ENCODE measurements at regions of chr17 and their contacts with region 1.

Region 1: GRCh38 chr17:75109407-75110233 is at the start of gene ARMC7:
- DNase-seq: peak; percentile 85 to 89 (median 88)
- H3K4me3 ChIP-seq: peak within 1 kb of the TSS; percentile 69 to 84
- H3K4me3 Mint-ChIP-seq: peak within 1 kb of the TSS; percentile 88 to 93 (median 91)
- H3K27ac ChIP-seq: peak within 1 kb of the TSS; percentile 60
- H3K27ac Mint-ChIP-seq: peak within 1 kb of the TSS; percentile 76 to 96 (median 92)
- H3K4me1 ChIP-seq: peaks cover 41% of the 10 kb centered on the region
- H3K4me1 Mint-ChIP-seq: peaks cover 22 to 42% (median 31%) of the 10 kb centered on the region in 4 donors
- H3K27me3 ChIP-seq: no peaks in the 10 kb centered on the region
- H3K27me3 Mint-ChIP-seq: no peaks in the 10 kb centered on the region
- total RNA-seq, gene ARMC7: 20.0 to 21.9 TPM

Region 2: DNA sequence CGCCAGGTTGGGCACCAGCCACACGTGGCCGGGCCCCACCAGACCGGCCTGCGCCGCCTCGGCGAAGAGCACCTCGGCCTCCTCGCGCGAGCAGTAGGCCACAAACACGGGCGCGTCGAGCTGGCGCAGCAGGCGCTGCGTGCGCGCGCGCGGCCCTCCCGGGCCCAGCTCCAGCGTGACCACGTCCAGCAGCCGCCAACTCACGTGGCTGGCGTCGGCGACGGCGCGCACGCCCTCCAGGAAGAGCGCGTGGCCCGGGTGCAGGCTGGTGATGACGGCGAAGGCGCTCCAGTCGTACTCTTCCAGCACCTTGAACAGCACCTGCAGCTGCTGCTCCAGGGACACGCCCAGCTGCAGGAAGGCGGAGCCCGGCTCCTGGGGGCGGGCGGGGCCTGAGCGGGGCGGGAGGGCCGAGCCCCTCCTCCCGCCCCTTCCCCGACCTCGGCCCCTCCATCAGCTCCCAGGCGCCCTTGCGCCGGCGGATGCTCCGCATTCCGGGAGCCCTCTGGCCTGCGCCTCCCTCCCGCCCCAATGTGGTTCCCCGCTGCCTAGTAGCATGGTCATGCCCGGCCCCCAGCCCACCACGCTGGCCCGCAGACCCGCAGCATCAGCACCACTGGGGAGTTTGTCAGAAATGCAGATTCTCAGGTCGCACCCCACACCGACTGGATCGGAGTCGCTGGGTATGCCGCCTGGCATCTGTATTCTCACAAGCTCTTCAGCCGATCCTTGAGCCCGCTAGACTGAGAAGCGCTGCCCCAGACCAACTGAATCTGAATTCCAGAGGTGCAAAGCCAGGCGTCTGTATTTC is 257.2 kb before region 1 on chr17:
- CTCF ChIA-PET with region 1: no interaction called
- POLR2A ChIA-PET with region 1: no interaction called
- intact Hi-C with region 1: no loop called
- DNase-seq: peak; percentile 60 to 80 (median 71)
- H3K4me3 ChIP-seq: peak overlapping the region in 1 of 2 donors; percentile 41
- H3K4me3 Mint-ChIP-seq: peak overlapping the region; percentile 75 to 84 (median 78)
- H3K27ac ChIP-seq: no peak overlapping the region
- H3K27ac Mint-ChIP-seq: peak overlapping the region in 2 of 7 donors; percentile 24 to 72
- H3K4me1 ChIP-seq: peaks cover 11% of the 10 kb centered on the region
- H3K4me1 Mint-ChIP-seq: peaks cover 3 to 19% (median 6%) of the 10 kb centered on the region in 4 donors
- H3K27me3 ChIP-seq: peaks cover 25% of the 10 kb centered on the region
- H3K27me3 Mint-ChIP-seq: peaks cover 19 to 50% of the 10 kb centered on the region in 2 donors

Region 3: DNA sequence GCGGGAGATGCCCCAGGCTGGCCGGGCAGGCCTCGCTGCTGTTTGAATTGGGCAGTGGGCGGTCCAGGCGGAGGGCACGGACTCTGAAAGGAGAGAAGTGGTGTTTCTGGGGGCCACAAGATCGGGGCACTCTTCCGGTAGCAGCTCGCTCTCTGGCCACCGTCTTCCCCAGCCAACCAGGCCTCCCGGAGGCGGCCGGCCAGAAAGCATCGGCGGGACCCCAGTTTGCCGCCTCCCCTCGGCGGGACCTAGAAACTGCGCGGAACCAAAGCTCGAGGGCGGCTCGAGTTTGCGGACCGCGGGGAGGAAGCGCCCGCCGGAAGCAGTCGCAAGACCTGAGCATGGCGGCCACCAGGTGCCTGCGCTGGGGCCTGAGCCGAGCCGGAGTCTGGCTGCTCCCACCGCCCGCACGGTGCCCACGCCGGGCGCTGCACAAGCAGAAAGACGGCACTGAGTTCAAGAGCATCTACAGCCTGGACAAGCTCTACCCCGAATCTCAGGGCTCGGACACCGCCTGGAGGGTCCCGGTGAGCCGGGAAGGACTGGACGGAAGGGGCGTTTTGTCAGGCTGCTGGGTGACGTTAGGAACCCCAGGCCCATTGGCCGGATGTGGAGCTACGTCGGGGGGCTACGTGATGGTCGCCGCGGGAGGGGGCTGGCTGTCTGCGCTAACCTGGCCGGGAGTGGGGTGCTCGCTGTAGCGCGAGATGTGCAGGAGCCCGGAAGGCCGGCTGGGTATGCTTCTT is 97.1 kb before region 1 on chr17 and contains the start of gene MRPL58:
- CTCF ChIA-PET with region 1: interaction called, 19 read pairs
- POLR2A ChIA-PET with region 1: interaction called, 17 read pairs
- intact Hi-C with region 1: loop called (anchors 1 kb)
- DNase-seq: peak; percentile 75 to 79 (median 76)
- H3K4me3 ChIP-seq: peak within 1 kb of the TSS; percentile 85 to 90
- H3K4me3 Mint-ChIP-seq: peak within 1 kb of the TSS; percentile 93 to 98 (median 96)
- H3K27ac ChIP-seq: peak within 1 kb of the TSS; percentile 71
- H3K27ac Mint-ChIP-seq: peak within 1 kb of the TSS; percentile 80 to 94 (median 92)
- H3K4me1 ChIP-seq: peaks cover 19% of the 10 kb centered on the region
- H3K4me1 Mint-ChIP-seq: peaks cover 20 to 44% (median 32%) of the 10 kb centered on the region in 4 donors
- H3K27me3 ChIP-seq: no peaks in the 10 kb centered on the region
- H3K27me3 Mint-ChIP-seq: no peaks in the 10 kb centered on the region
- total RNA-seq, gene MRPL58: 22.6 to 26.7 TPM

Region 4: GRCh38 chr17:75069783-75070182 is 39.8 kb before region 1 on chr17:
- CTCF ChIA-PET with region 1: interaction called, 11 read pairs
- POLR2A ChIA-PET with region 1: interaction called, 4 read pairs
- intact Hi-C with region 1: no loop called
- DNase-seq: no peak
- H3K4me3 ChIP-seq: no peak overlapping the region
- H3K4me3 Mint-ChIP-seq: no peak overlapping the region
- H3K27ac ChIP-seq: no peak overlapping the region
- H3K27ac Mint-ChIP-seq: peak overlapping the region in 4 of 7 donors; percentile 25 to 62 (median 38)
- H3K4me1 ChIP-seq: peaks cover 21% of the 10 kb centered on the region
- H3K4me1 Mint-ChIP-seq: peaks cover 13 to 34% (median 23%) of the 10 kb centered on the region in 4 donors
- H3K27me3 ChIP-seq: no peaks in the 10 kb centered on the region
- H3K27me3 Mint-ChIP-seq: no peaks in the 10 kb centered on the region

Region 5: GRCh38 chr17:75138519-75138918 is 28.9 kb after region 1 on chr17:
- CTCF ChIA-PET with region 1: interaction called, 127 read pairs
- POLR2A ChIA-PET with region 1: interaction called, 97 read pairs
- intact Hi-C with region 1: no loop called
- DNase-seq: no peak
- H3K4me3 ChIP-seq: no peak overlapping the region
- H3K4me3 Mint-ChIP-seq: no peak overlapping the region
- H3K27ac ChIP-seq: no peak overlapping the region
- H3K27ac Mint-ChIP-seq: peak overlapping the region in 3 of 7 donors; percentile 12 to 32 (median 25)
- H3K4me1 ChIP-seq: peaks cover 16% of the 10 kb centered on the region
- H3K4me1 Mint-ChIP-seq: peaks cover 8 to 25% (median 12%) of the 10 kb centered on the region in 4 donors
- H3K27me3 ChIP-seq: no peaks in the 10 kb centered on the region
- H3K27me3 Mint-ChIP-seq: no peaks in the 10 kb centered on the region

Region 6: GRCh38 chr17:75182569-75183450 is 73.2 kb after region 1 on chr17 and contains the start of gene SUMO2:
- CTCF ChIA-PET with region 1: interaction called, 325 read pairs
- POLR2A ChIA-PET with region 1: interaction called, 16 read pairs
- intact Hi-C with region 1: no loop called
- DNase-seq: peak; percentile 92 to 95 (median 94)
- H3K4me3 ChIP-seq: peak within 1 kb of the TSS; percentile 52 to 93
- H3K4me3 Mint-ChIP-seq: peak within 1 kb of the TSS; percentile 89 to 97 (median 92)
- H3K27ac ChIP-seq: peak within 1 kb of the TSS; percentile 94
- H3K27ac Mint-ChIP-seq: peak within 1 kb of the TSS; percentile 87 to 98 (median 97)
- H3K4me1 ChIP-seq: peaks cover 44% of the 10 kb centered on the region
- H3K4me1 Mint-ChIP-seq: peaks cover 20 to 47% (median 35%) of the 10 kb centered on the region in 4 donors
- H3K27me3 ChIP-seq: no peaks in the 10 kb centered on the region
- H3K27me3 Mint-ChIP-seq: no peaks in the 10 kb centered on the region
- total RNA-seq, gene SUMO2: 255 to 264 TPM

Region 7: GRCh38 chr17:75238684-75239191 is 129.1 kb after region 1 on chr17:
- CTCF ChIA-PET with region 1: interaction called, 42 read pairs
- POLR2A ChIA-PET with region 1: interaction called, 12 read pairs
- intact Hi-C with region 1: loop called (anchors 1 kb)
- DNase-seq: peak; percentile 58 to 68 (median 67)
- H3K4me3 ChIP-seq: no peak overlapping the region
- H3K4me3 Mint-ChIP-seq: peak overlapping the region; percentile 82 to 94 (median 87)
- H3K27ac ChIP-seq: peak overlapping the region; percentile 16
- H3K27ac Mint-ChIP-seq: peak overlapping the region; percentile 90 to 99 (median 96)
- H3K4me1 ChIP-seq: peaks cover 45% of the 10 kb centered on the region
- H3K4me1 Mint-ChIP-seq: peaks cover 24 to 43% (median 31%) of the 10 kb centered on the region in 4 donors
- H3K27me3 ChIP-seq: no peaks in the 10 kb centered on the region
- H3K27me3 Mint-ChIP-seq: no peaks in the 10 kb centered on the region

Region 8: DNA sequence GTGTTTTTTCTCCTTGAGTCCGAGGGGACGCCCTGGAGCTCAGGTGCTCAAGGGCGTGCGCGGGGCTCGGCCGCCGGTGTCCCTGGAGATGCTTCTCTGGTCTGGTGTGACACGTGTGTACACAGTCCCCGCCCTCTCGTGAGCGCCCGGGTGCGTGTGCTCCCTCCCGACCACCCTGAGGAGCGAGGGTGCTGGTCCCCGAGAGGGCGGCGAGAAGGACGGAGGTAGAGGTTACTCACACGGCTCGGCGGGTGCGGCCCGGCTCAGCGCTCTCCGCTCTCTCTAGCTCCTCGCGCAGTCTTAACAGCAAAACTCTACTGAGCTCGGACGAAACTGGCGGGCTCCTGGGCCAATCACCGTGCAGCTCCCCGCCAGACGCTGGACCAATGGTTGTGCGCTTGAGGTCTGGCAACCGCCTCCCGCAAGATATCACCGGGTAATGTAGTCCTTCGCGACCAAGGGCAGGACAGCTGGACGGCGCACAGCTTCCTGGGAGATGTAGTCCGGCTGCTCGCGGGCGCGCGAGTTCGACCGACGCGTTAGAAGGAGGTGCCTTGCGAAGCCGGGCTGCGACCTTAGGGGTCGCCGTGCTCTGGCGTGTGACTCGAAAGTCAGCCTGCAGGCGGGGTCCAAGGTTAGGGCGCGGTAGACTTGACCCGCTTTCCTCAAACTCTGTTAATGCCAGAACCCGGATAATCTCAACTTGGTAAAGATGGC is 179.7 kb after region 1 on chr17 and contains the start of gene SLC25A19:
- CTCF ChIA-PET with region 1: interaction called, 10 read pairs
- POLR2A ChIA-PET with region 1: interaction called, 6 read pairs
- intact Hi-C with region 1: no loop called
- DNase-seq: peak; percentile 95 to 99 (median 97)
- H3K4me3 ChIP-seq: peak within 1 kb of the TSS; percentile 93 to 96
- H3K4me3 Mint-ChIP-seq: peak within 1 kb of the TSS; percentile 98 to 100 (median 100)
- H3K27ac ChIP-seq: peak within 1 kb of the TSS; percentile 79
- H3K27ac Mint-ChIP-seq: peak within 1 kb of the TSS; percentile 98 to 100 (median 100)
- H3K4me1 ChIP-seq: peaks cover 12% of the 10 kb centered on the region
- H3K4me1 Mint-ChIP-seq: peaks cover 4 to 31% (median 14%) of the 10 kb centered on the region in 4 donors
- H3K27me3 ChIP-seq: no peaks in the 10 kb centered on the region
- H3K27me3 Mint-ChIP-seq: no peaks in the 10 kb centered on the region
- total RNA-seq, gene SLC25A19: 19.8 to 21.8 TPM

Measured in CD4-positive, alpha-beta memory T cell (primary cell).